ENCODE measurements at regions of chr4 and their contacts with region 1.

Region 1: DNA sequence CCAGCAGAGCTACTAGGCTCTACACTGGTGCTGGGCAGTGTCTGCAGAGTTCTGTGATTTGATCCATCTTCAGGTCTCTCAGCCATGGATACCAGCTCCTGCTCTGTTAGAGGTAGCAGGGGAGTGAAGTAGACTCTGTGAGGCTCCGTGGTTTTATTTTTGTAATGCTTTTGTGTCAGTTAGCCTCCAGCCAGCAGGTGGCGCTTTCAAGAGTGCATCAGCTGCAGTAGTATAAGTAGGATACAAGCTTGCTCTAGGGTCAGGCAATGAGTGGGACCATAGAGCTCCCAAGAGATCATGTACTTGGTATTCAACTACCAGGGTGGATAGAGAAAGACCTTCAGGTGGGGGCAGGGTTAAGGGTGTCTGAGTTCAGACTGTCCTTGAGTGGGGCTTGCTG is 362.5 kb upstream of the TRAM1L1 start:
- DNase-seq: peak; percentile 24
- H3K4me3 Mint-ChIP-seq: no peak overlapping the region
- H3K27ac Mint-ChIP-seq: no peak overlapping the region
- H3K4me1 Mint-ChIP-seq: no peaks in the 10 kb centered on the region
- H3K27me3 Mint-ChIP-seq: no peaks in the 10 kb centered on the region

Region 2: GRCh38 chr4:117429061-117429460 is 18.9 kb before region 1 on chr4:
- CTCF ChIA-PET with region 1: no interaction called
- POLR2A ChIA-PET with region 1: no interaction called
- intact Hi-C with region 1: no loop called
- DNase-seq: no peak
- H3K4me3 Mint-ChIP-seq: no peak overlapping the region
- H3K27ac Mint-ChIP-seq: no peak overlapping the region
- H3K4me1 Mint-ChIP-seq: no peaks in the 10 kb centered on the region
- H3K27me3 Mint-ChIP-seq: no peaks in the 10 kb centered on the region

Region 3: DNA sequence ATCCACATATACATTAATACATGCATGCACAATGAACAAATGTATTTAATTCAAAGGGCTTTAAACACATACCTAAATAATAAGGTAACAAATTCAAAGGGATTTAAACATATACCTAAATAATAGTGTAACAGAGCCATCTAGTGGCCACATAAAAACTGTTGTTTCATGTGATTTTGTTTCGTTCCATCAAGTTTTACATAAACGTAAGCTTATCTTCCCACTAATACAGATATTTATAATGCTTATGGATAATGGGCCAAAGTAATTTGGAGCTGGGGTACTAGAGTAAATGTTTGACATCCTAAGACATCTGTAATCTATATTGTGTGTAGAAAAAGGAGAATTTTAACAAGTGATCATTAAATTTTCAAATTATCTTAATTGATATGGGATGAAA is 822.6 kb after region 1 on chr4:
- CTCF ChIA-PET with region 1: no interaction called
- POLR2A ChIA-PET with region 1: no interaction called
- intact Hi-C with region 1: loop called (anchors 2 kb)
- DNase-seq: no peak
- H3K4me3 Mint-ChIP-seq: no peak overlapping the region
- H3K27ac Mint-ChIP-seq: no peak overlapping the region
- H3K4me1 Mint-ChIP-seq: peaks cover 2% of the 10 kb centered on the region
- H3K27me3 Mint-ChIP-seq: peaks cover 1% of the 10 kb centered on the region